ENCODE measurements at regions of chr16 and their contacts with region 1.

Region 1: DNA sequence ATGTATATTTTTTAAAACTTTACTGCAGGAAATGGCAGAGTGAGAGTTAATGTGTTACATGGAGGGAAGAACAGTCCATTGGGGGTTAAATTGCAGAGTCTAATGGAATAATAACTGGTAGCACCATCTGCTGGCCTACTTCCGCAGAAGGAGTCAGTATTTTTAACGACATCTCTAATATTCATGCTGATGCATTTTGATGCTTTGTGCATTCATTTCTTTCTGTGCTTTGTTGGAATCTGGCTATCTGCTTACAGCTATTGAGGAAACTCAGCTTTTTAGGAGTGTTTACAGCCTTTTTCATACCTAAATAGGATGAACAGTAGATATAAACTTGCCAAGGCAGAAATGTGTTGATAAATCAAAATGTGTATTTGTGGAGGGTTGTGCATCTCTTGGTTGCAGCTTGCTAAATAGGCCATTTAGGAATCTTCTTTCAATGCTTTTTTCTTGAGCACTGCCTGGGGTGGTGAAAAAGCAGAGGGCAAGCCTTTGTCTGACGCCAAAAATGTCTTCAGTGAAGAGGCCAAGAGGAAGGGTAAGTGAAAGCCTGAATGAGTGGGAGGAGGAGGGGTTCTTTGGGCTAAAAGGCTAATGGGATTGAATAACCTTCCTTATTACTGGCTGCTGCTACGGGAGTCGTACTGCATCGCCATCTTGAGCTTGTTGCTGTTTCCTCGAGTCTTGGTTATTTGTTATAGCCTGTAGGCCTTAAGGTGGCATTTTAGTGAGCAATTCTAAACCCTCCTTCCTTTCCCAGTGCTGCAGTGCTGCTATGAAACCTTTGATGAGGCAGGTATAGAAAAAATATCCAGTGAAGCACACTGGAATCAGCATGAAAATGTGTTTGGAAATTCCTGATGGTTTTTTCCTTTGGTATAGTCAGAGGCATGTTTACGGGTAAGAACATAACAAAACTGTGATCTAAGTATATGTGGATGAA is 153.3 kb downstream of the CHD9 start:
- DNase-seq: peak; percentile 90
- H3K4me3 Mint-ChIP-seq: peak overlapping the region; percentile 80
- H3K27ac Mint-ChIP-seq: peak overlapping the region; percentile 76
- H3K4me1 Mint-ChIP-seq: peaks cover 23% of the 10 kb centered on the region
- H3K27me3 Mint-ChIP-seq: no peaks in the 10 kb centered on the region
- CTCF ChIP-seq: peak; percentile 57

Region 2: DNA sequence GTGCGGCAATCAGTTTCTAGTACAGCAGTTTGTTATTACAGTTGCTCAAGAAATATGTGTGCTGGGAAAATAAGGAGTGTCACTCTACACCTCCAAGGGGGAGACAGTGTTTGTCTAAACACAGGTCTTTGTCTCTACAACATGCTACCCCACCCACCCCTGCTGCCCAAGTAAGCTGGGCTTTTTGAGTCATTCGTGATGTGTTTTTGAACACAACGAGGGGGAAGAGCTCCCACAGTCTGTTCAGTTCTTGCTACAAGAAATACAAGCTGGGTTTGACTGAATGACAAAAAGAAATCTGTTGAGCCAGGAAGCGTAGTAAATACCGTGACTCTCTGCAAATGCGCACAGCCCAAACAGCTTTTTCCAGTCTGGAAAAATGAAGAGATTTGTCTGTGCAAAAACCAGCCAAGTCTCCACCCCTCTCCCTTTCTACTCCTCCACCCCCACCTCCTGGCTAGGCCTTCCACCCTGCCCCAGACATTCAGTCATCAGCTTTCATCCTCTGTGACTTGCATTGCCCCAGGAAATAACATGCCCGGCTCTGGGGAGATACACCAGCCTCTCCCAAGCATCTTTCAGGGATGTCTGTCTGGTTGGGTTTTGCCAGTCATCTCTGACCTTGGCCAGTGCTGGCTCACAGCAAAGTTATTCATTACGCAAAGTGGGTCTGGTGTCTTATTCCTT is 127.6 kb before region 1 on chr16:
- CTCF ChIA-PET with region 1: interaction called, 14 read pairs
- POLR2A ChIA-PET with region 1: interaction called, 28 read pairs
- intact Hi-C with region 1: no loop called
- DNase-seq: peak; percentile 87
- H3K4me3 Mint-ChIP-seq: peak overlapping the region; percentile 64
- H3K27ac Mint-ChIP-seq: peak overlapping the region; percentile 84
- H3K4me1 Mint-ChIP-seq: peaks cover 63% of the 10 kb centered on the region
- H3K27me3 Mint-ChIP-seq: no peaks in the 10 kb centered on the region
- CTCF ChIP-seq: no peak

Region 3: DNA sequence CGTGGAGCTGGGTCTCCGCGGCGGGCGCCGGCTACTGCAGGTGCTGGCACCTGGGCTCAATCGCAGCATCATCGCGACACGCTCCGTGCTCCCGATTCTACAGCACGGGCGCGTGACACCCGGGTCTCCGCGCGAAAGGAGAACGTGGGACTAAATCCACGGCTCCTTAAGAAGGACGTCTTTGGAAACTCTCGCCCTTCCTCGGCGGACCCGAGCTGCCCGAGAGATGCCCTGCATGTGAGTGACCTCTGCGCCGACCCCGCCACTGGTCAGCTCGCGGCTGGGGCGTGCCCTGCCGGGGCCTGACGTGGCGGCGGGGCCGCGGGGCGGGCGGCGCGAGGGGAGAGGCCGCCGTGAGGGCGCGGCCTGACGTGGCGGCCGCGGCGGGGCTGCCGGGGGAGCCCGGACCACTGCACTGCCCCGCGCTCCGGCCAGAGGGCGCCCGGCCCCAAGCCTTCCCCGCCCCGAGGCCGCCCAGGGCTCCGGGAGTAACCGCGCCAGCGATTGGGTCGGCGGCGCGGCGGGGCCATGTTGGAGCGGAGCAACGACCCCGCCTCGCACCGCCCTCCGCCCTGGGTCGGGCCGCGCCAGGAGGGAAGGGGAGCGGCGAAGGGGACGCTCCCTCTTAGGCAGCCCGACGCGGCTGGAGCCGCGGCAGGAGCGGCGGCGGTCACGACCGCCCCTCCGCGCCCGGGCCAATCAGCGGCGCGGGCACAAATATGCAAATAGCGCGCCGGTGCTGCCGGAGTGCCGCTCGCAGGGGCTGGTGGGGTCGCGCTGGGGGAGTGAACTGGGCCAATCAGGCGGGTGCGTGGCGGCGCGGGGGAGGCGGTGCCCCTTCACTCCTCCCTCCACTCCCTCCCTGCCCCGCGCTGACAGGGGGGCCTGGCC is 77.7 kb before region 1 on chr16:
- CTCF ChIA-PET with region 1: interaction called, 7 read pairs
- POLR2A ChIA-PET with region 1: interaction called, 19 read pairs
- intact Hi-C with region 1: loop called (anchors 1 kb)
- DNase-seq: peak; percentile 93
- H3K4me3 Mint-ChIP-seq: peak overlapping the region; percentile 94
- H3K27ac Mint-ChIP-seq: peak overlapping the region; percentile 89
- H3K4me1 Mint-ChIP-seq: peaks cover 23% of the 10 kb centered on the region
- H3K27me3 Mint-ChIP-seq: no peaks in the 10 kb centered on the region
- CTCF ChIP-seq: peak; percentile 61

Region 4: GRCh38 chr16:53159781-53160436 is 48.2 kb before region 1 on chr16:
- CTCF ChIA-PET with region 1: interaction called, 12 read pairs
- POLR2A ChIA-PET with region 1: interaction called, 17 read pairs
- intact Hi-C with region 1: loop called (anchors 5 kb)
- DNase-seq: peak; percentile 65
- H3K4me3 Mint-ChIP-seq: no peak overlapping the region
- H3K27ac Mint-ChIP-seq: no peak overlapping the region
- H3K4me1 Mint-ChIP-seq: peaks cover 11% of the 10 kb centered on the region
- H3K27me3 Mint-ChIP-seq: no peaks in the 10 kb centered on the region
- CTCF ChIP-seq: peak; percentile 54

Region 5: DNA sequence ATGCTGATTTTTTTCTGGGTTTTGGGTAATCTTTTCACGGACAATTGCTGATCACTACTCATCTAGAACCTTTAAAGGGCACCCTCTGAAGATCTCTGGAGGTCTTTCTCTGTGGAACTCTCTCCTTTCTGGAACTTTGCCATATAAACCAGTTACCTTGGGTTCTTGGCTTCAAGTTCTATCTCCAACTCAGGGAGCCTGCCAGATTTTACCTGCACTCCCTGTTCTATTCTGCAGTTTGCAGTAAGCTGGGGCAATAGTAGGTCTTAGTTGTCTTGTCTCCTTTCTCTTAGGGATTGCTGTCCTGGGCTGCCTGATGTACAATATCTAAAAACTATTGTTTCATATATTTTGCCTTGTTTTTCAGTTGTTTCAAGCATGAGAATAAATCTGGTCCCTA is 33.0 kb before region 1 on chr16:
- CTCF ChIA-PET with region 1: interaction called, 7 read pairs
- POLR2A ChIA-PET with region 1: interaction called, 12 read pairs
- intact Hi-C with region 1: no loop called
- DNase-seq: no peak
- H3K4me3 Mint-ChIP-seq: no peak overlapping the region
- H3K27ac Mint-ChIP-seq: peak overlapping the region; percentile 19
- H3K4me1 Mint-ChIP-seq: peaks cover 17% of the 10 kb centered on the region
- H3K27me3 Mint-ChIP-seq: no peaks in the 10 kb centered on the region
- CTCF ChIP-seq: no peak

Region 6: GRCh38 chr16:53261276-53261675 is 53.2 kb after region 1 on chr16:
- CTCF ChIA-PET with region 1: no interaction called
- POLR2A ChIA-PET with region 1: no interaction called
- intact Hi-C with region 1: no loop called
- DNase-seq: no peak
- H3K4me3 Mint-ChIP-seq: no peak overlapping the region
- H3K27ac Mint-ChIP-seq: no peak overlapping the region
- H3K4me1 Mint-ChIP-seq: peaks cover 14% of the 10 kb centered on the region
- H3K27me3 Mint-ChIP-seq: no peaks in the 10 kb centered on the region
- CTCF ChIP-seq: no peak

Region 7: GRCh38 chr16:53435066-53435688 is 227.1 kb after region 1 on chr16:
- CTCF ChIA-PET with region 1: interaction called, 4 read pairs
- POLR2A ChIA-PET with region 1: interaction called, 10 read pairs
- intact Hi-C with region 1: no loop called
- DNase-seq: peak; percentile 90
- H3K4me3 Mint-ChIP-seq: peak overlapping the region; percentile 97
- H3K27ac Mint-ChIP-seq: peak overlapping the region; percentile 95
- H3K4me1 Mint-ChIP-seq: no peaks in the 10 kb centered on the region
- H3K27me3 Mint-ChIP-seq: no peaks in the 10 kb centered on the region
- CTCF ChIP-seq: no peak